Posterior vena cava (tissue), 2 donors: ENCODE measurements at regions of chr17 and their contacts with region 1.

Region 1: GRCh38 chr17:59180626-59181025 is 25.1 kb downstream of the PRR11 start:
- DNase-seq: no peak

Region 2: DNA sequence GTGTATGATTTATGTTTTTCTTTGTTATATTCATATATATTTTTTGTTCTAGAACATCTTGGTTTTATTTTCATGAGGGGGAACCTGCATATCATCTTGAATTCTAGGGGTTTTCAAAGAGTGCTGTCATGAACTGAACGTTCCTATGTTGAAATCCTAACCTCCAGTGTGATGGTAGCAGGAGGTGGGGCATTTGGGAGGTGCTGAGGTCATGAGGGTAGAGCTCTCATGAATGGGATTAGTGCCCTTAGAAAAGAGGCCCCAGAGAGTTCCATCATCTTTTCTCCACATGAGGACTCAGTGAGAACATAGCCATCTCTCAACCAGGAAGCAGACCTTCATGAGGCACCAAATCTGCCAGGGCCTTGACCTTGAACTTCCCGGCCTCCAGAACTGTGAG is 1400.9 kb before region 1 on chr17:
- intact Hi-C with region 1: loop called in 1 of 2 experiments (anchors 5 kb)
- DNase-seq: no peak

Region 3: GRCh38 chr17:59287452-59287851 is 106.8 kb after region 1 on chr17:
- intact Hi-C with region 1: no loop called
- DNase-seq: no peak